ENCODE measurements at regions of chr3 and their contacts with region 1.

Region 1: GRCh38 chr3:186108941-186109865 is at the start of gene ETV5:
- DNase-seq: peak; percentile 99
- H3K4me3 ChIP-seq: peak within 1 kb of the TSS; percentile 64
- H3K4me3 Mint-ChIP-seq: peak within 1 kb of the TSS; percentile 80
- H3K27ac Mint-ChIP-seq: peak within 1 kb of the TSS; percentile 79
- H3K4me1 ChIP-seq: peaks cover 8% of the 10 kb centered on the region; the same call in 1 of the 2 replicates
- H3K4me1 Mint-ChIP-seq: peaks cover 25% of the 10 kb centered on the region
- H3K27me3 ChIP-seq: no peaks in the 10 kb centered on the region
- H3K27me3 Mint-ChIP-seq: no peaks in the 10 kb centered on the region
- CTCF ChIP-seq: no peak
- total RNA-seq, gene ETV5: 16.2 and 18.6 TPM in 2 replicates

Region 2: GRCh38 chr3:186176511-186176943 is 67.3 kb after region 1 on chr3:
- CTCF ChIA-PET with region 1: no interaction called
- POLR2A ChIA-PET with region 1: no interaction called
- intact Hi-C with region 1: loop called (anchors 5 kb)
- DNase-seq: peak; percentile 66 to 75
- H3K4me3 ChIP-seq: no peak overlapping the region
- H3K4me3 Mint-ChIP-seq: peak overlapping the region; percentile 0
- H3K27ac Mint-ChIP-seq: peak overlapping the region; percentile 17
- H3K4me1 ChIP-seq: peaks cover 32% of the 10 kb centered on the region
- H3K4me1 Mint-ChIP-seq: peaks cover 36% of the 10 kb centered on the region
- H3K27me3 ChIP-seq: no peaks in the 10 kb centered on the region
- H3K27me3 Mint-ChIP-seq: no peaks in the 10 kb centered on the region
- CTCF ChIP-seq: no peak

Region 3: GRCh38 chr3:186241910-186242821 is 133.0 kb after region 1 on chr3:
- CTCF ChIA-PET with region 1: no interaction called
- POLR2A ChIA-PET with region 1: no interaction called
- intact Hi-C with region 1: loop called (anchors 5 kb)
- DNase-seq: peak; percentile 68 to 70
- H3K4me3 ChIP-seq: no peak overlapping the region
- H3K4me3 Mint-ChIP-seq: no peak overlapping the region
- H3K27ac Mint-ChIP-seq: no peak overlapping the region
- H3K4me1 ChIP-seq: no peaks in the 10 kb centered on the region
- H3K4me1 Mint-ChIP-seq: no peaks in the 10 kb centered on the region
- H3K27me3 ChIP-seq: no peaks in the 10 kb centered on the region
- H3K27me3 Mint-ChIP-seq: no peaks in the 10 kb centered on the region
- CTCF ChIP-seq: peak; percentile 61 to 71

Region 4: GRCh38 chr3:187255314-187255713 is 1146.1 kb after region 1 on chr3:
- CTCF ChIA-PET with region 1: no interaction called
- POLR2A ChIA-PET with region 1: no interaction called
- intact Hi-C with region 1: no loop called
- DNase-seq: no peak
- H3K4me3 ChIP-seq: no peak overlapping the region
- H3K4me3 Mint-ChIP-seq: no peak overlapping the region
- H3K27ac Mint-ChIP-seq: no peak overlapping the region
- H3K4me1 ChIP-seq: no peaks in the 10 kb centered on the region
- H3K4me1 Mint-ChIP-seq: no peaks in the 10 kb centered on the region
- H3K27me3 ChIP-seq: no peaks in the 10 kb centered on the region
- H3K27me3 Mint-ChIP-seq: no peaks in the 10 kb centered on the region
- CTCF ChIP-seq: no peak

Measured in Caco-2 (cell line).